ENCODE measurements at regions of chr16 and their contacts with region 1.

Region 1: DNA sequence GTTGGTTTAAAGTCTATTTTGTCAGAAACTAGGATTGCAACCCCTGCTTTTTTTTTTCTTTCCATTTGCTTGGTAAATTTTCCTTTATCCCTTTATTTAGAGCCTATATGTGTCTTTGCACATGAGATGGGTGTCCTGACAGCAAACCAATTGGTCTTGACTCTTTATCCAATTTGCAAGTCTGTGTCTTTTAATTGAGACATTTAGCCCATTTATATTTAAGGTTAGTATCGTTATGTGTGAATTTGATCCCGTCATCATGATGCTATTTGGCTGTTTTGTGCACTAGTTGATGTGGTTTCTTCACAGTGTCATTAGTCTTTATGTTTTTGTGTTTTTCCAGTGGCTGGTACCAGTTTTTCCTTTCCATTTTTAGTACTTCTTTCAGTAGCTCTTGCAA is 127.7 kb upstream of the ZNF267 start:
- DNase-seq: no peak
- ATAC-seq: no peak

Region 2: GRCh38 chr16:31344712-31345111 is 401.2 kb before region 1 on chr16:
- intact Hi-C with region 1: loop called (anchors 5 kb)
- DNase-seq: no peak
- ATAC-seq: no peak

Region 3: DNA sequence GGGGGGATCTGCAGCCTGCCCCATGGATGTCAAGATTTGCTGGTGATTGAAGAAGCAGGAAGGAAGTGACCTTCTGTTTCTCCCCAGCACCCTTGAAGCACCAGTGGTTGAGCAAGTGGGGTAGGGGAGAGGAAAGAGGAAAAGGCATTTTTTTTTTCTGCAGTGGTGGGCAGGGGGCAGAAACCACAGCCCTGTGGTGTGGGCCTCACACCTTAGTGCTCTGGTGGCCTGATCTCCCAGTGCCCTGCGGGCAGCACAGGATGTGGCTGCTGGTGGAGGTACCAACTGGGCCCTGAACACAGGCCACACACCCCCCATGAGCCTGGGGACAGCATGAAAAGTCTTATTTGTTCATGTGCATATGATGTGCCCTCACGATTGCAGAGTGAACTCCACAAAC is 345.7 kb before region 1 on chr16:
- intact Hi-C with region 1: no loop called
- DNase-seq: no peak
- ATAC-seq: no peak

Region 4: GRCh38 chr16:31767267-31767666 is 21.4 kb after region 1 on chr16:
- intact Hi-C with region 1: no loop called
- DNase-seq: no peak
- ATAC-seq: no peak